HEK293T (cell line): ENCODE measurements at regions of chr5 and their contacts with region 1.

Region 1: DNA sequence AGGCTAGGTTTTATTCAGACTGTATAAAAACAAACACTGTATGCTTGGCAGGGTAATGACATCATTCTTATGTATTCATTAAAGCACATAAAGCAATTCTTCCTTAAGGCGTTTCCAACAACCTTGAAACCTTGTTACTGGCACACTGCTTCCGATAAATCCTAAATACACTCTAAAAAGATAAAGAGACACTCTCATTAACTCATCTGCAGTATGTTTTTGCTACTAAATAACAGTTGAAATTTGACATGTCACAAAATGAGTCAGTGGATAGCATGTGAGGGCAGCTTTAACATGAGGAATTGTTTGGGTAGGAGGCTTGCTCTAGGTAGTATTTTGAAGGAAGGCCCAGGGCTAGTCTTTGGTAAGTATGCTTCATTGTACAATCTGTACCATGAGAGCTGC is 13.7 kb downstream of the YIPF5 start:
- DNase-seq: no peak

Region 2: DNA sequence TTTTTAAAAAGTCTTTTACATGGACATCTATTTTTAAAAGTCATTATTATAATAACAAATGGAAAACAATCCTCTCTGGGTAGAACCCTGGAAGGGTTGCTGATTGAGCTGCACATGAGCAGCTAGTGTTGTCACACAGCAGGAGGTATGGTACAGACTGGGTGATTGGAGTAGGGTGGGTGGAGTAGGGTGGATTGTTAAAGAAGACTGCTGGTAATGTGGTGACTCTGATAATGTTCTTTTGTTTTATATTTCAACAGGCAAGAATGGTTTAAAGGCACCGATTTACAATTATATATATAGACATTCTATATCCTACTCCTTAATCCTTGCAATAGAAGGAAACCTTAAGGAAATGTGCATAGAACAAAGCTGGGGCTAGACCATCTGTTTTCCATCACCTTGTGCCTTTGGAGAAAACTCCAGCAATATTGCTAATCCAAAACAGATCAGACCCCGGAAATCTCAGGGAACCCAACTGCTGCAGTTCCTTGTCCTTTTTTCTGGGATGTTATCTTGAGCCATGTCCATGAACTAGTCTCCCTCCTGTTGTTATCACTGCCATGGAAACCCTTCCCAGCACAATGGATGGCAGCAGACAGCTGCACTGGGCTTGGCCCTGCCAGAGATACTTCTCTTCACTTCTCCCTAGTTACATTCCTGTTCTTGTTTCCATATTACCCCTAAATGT is 116.0 kb before region 1 on chr5:
- CTCF ChIA-PET with region 1: no interaction called
- POLR2A ChIA-PET with region 1: no interaction called
- DNase-seq: no peak

Region 3: GRCh38 chr5:144170276-144171024 is 13.7 kb after region 1 on chr5 and contains the starts of genes KCTD16 and YIPF5:
- CTCF ChIA-PET with region 1: no interaction called
- POLR2A ChIA-PET with region 1: interaction called, 17 read pairs
- DNase-seq: peak; percentile 97